ENCODE measurements at regions of chr7 and their contacts with region 1.

Region 1: GRCh38 chr7:79298145-79298760 is 155.2 kb downstream of the MAGI2 start:
- ATAC-seq: peak in 1 of 8 experiments; percentile 40
- H3K4me3 ChIP-seq: no peak overlapping the region
- H3K27ac ChIP-seq: no peak overlapping the region
- H3K4me1 ChIP-seq: peaks cover 0 to 3% of the 10 kb centered on the region in 2 donors

Region 2: GRCh38 chr7:79741684-79742083 is 443.4 kb after region 1 on chr7:
- in situ Hi-C with region 1: loop called in 1 of 9 experiments (anchors 25 kb)
- ATAC-seq: peak in 1 of 8 experiments; percentile 43
- H3K4me3 ChIP-seq: no peak overlapping the region
- H3K27ac ChIP-seq: no peak overlapping the region
- H3K4me1 ChIP-seq: peaks cover 0 to 4% of the 10 kb centered on the region in 2 donors

Region 3: GRCh38 chr7:80018941-80019752 is 720.9 kb after region 1 on chr7:
- in situ Hi-C with region 1: loop called in 6 of 9 experiments (anchors 10 to 25 kb)
- ATAC-seq: peak; percentile 72 to 99 (median 86)
- H3K4me3 ChIP-seq: no peak overlapping the region
- H3K27ac ChIP-seq: no peak overlapping the region
- H3K4me1 ChIP-seq: no peaks in the 10 kb centered on the region

Region 4: GRCh38 chr7:80027611-80028173 is 729.4 kb after region 1 on chr7:
- in situ Hi-C with region 1: loop called in 6 of 9 experiments (anchors 10 to 25 kb)
- ATAC-seq: peak in 2 of 8 experiments; percentile 25 to 46
- H3K4me3 ChIP-seq: no peak overlapping the region
- H3K27ac ChIP-seq: no peak overlapping the region
- H3K4me1 ChIP-seq: no peaks in the 10 kb centered on the region